ENCODE measurements at regions of chr16 and their contacts with region 1.

Region 1: DNA sequence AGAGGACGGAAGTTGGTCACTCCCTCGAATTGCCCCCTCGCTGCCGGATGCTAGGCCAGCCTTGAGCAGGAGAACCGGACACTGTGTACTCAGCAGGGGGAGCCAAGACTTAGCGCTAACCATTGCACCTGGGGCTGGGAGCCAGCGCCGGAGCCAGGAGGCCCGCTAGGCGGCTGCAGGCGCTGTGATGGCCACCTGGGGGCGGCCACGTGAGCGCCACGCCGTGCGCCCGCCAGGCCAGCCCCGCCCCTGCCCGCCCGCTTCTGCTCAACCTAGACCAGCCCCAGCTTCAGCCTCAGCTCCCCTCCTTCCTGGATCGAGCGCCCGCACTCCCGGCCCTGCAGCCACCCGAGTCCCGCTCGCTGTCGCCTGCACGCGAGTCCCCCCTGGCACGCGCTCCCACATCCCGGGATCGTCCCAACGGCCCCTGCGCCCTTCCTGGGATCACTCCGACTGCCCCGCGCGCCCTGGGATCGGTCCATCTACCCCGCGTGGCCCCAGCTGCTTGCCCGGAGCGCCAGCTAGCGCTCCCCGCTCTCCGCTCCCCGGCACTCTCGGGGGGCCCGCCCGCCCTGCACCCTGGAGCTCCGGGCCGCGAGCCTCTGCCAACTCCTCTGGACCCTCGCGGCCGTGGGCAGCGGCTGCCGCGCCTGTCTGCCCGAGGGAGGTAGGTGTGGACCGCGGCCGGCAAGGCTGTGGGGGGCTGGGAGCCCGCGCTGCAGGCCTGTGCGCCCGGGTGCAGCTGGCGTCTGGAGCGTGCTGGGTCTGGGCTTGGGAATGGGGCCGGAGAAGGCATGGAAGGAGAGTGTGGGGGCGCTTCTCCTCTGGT is at the start of gene EEF2K:
- DNase-seq: peak; percentile 96
- H3K4me3 Mint-ChIP-seq: peak within 1 kb of the TSS; percentile 79
- H3K27ac Mint-ChIP-seq: peak within 1 kb of the TSS; percentile 70
- H3K4me1 Mint-ChIP-seq: peaks cover 19% of the 10 kb centered on the region
- H3K27me3 Mint-ChIP-seq: no peaks in the 10 kb centered on the region
- CTCF ChIP-seq: peak; percentile 83
- total RNA-seq, gene EEF2K: 15.0 and 15.9 TPM in 2 replicates

Region 2: DNA sequence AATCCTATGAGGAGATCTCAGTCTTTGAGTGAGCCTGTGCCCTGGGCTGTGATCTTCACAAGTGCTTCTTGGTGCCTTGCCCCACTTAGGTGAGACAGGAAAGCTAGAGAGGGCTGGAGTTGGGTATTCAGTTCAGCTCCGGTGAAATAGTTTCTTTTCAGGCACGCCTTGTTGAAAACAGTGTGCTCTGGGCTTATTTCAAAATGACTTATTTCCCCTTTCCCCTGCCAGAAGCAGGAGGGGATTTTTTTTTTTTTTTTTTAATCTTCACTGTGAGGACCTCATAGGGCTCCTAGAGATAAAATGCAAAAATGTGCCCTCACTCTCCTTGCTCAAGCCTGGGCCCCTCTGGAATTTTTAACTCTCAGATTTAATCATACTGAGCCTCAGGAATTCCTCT is 171.1 kb before region 1 on chr16:
- CTCF ChIA-PET with region 1: no interaction called
- POLR2A ChIA-PET with region 1: no interaction called
- intact Hi-C with region 1: no loop called
- DNase-seq: no peak
- H3K4me3 Mint-ChIP-seq: no peak overlapping the region
- H3K27ac Mint-ChIP-seq: no peak overlapping the region
- H3K4me1 Mint-ChIP-seq: peaks cover 13% of the 10 kb centered on the region
- H3K27me3 Mint-ChIP-seq: no peaks in the 10 kb centered on the region
- CTCF ChIP-seq: no peak

Region 3: GRCh38 chr16:22181843-22182242 is 24.4 kb before region 1 on chr16:
- CTCF ChIA-PET with region 1: no interaction called
- POLR2A ChIA-PET with region 1: no interaction called
- intact Hi-C with region 1: no loop called
- DNase-seq: no peak
- H3K4me3 Mint-ChIP-seq: no peak overlapping the region
- H3K27ac Mint-ChIP-seq: no peak overlapping the region
- H3K4me1 Mint-ChIP-seq: no peaks in the 10 kb centered on the region
- H3K27me3 Mint-ChIP-seq: peaks cover 30% of the 10 kb centered on the region
- CTCF ChIP-seq: no peak

Region 4: DNA sequence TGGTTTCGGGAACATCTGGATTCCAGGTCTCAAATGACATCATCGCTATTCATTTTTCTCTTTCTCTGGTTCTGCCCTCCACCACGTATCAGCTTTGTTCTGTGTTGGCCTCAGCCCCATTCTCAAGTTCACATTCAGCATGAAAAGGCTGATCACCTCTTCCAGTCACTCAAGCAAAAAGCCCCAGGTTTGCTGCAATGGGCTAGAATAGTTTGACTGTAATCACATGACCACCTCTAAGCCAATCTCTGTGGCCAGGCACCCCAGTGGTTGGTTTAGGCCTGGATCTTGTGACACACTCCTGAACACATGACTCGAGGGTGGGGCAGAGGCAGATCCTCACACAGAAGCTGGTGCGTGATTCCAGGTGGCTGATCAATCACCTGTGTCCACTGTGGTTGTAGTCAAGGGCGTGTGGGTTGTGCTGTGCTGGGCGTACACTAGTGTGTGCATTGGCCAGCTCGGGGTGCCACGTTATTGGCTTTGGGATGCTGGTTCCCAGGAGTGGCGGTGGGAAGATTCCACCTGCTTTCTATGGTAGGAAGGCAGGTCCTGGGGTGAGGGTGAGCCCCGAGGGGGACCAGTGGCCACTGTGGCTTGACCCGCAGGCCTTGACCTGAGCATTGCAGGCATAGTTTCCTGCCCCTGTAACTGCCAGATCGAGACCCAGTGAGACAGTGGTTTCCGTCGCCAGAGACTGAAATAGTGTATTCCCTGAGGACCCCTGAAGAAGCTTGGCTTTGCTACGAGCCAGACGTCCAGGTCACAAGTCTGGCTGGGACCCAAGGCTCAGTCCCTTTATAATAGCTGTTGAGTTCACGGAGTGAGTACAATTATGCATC is 11.9 kb after region 1 on chr16:
- CTCF ChIA-PET with region 1: interaction called, 10 read pairs
- POLR2A ChIA-PET with region 1: interaction called, 11 read pairs
- intact Hi-C with region 1: no loop called
- DNase-seq: no peak
- H3K4me3 Mint-ChIP-seq: no peak overlapping the region
- H3K27ac Mint-ChIP-seq: no peak overlapping the region
- H3K4me1 Mint-ChIP-seq: peaks cover 19% of the 10 kb centered on the region
- H3K27me3 Mint-ChIP-seq: no peaks in the 10 kb centered on the region
- CTCF ChIP-seq: no peak

Region 5: GRCh38 chr16:22232277-22233042 is 26.2 kb after region 1 on chr16:
- CTCF ChIA-PET with region 1: interaction called, 6 read pairs
- POLR2A ChIA-PET with region 1: interaction called, 40 read pairs
- intact Hi-C with region 1: loop called (anchors 1 kb)
- DNase-seq: peak; percentile 91
- H3K4me3 Mint-ChIP-seq: peak overlapping the region; percentile 55
- H3K27ac Mint-ChIP-seq: peak overlapping the region; percentile 93
- H3K4me1 Mint-ChIP-seq: peaks cover 16% of the 10 kb centered on the region
- H3K27me3 Mint-ChIP-seq: no peaks in the 10 kb centered on the region
- CTCF ChIP-seq: no peak

Region 6: DNA sequence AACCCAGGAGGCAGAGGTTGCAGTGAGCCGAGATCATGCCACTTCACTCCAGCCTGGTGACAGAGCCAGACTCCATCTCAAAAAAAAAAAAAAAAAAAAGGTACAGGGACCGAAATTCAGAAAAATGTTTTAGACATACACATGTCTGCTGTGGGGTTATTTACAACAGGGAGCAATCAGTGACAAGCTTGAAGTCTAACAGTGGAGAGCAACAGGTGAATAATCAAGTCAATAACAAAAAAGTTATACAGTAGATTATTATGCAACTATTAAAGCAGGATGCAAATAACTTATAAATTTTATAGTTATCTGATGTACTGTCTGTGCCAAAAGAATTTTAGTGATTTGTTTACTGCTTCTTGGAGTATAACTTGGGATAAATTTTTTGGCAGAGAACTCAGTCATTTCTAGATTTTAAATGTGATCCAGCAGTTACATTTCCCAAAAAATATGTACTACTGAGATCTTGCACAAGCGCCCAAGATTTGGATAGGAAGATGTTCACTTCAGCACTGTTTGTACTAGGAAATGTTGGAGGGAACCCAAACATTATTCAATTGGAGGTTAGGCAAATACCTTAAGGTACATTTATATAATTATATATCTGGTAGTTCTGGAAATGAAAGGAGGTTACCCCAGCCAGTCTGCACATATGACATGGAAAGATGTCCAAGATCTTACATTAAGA is 33.9 kb after region 1 on chr16:
- CTCF ChIA-PET with region 1: interaction called, 6 read pairs
- POLR2A ChIA-PET with region 1: interaction called, 22 read pairs
- intact Hi-C with region 1: no loop called
- DNase-seq: peak; percentile 47
- H3K4me3 Mint-ChIP-seq: no peak overlapping the region
- H3K27ac Mint-ChIP-seq: no peak overlapping the region
- H3K4me1 Mint-ChIP-seq: peaks cover 7% of the 10 kb centered on the region
- H3K27me3 Mint-ChIP-seq: no peaks in the 10 kb centered on the region
- CTCF ChIP-seq: no peak

Region 7: DNA sequence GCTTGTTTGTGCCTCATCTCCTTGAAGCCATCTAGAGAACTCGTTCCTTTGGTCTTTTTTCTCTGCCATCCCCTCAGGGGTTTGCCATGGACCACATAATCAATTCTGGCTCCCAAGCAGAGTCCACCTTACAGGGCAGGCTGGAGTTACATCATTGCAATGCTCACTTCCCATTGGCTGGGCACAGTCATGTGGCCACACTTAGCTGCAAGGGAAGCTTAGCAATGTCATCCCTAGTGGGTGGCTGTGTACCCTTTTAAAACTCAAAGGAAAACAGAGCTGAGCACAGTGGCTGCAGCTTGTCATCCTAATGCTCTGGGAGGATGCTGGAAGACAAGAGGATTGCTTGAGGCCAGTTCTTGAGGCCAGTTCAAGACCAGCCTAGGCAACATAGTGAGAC is 49.1 kb after region 1 on chr16:
- CTCF ChIA-PET with region 1: no interaction called
- POLR2A ChIA-PET with region 1: no interaction called
- intact Hi-C with region 1: no loop called
- DNase-seq: no peak
- H3K4me3 Mint-ChIP-seq: no peak overlapping the region
- H3K27ac Mint-ChIP-seq: no peak overlapping the region
- H3K4me1 Mint-ChIP-seq: peaks cover 5% of the 10 kb centered on the region
- H3K27me3 Mint-ChIP-seq: no peaks in the 10 kb centered on the region
- CTCF ChIP-seq: no peak

Region 8: DNA sequence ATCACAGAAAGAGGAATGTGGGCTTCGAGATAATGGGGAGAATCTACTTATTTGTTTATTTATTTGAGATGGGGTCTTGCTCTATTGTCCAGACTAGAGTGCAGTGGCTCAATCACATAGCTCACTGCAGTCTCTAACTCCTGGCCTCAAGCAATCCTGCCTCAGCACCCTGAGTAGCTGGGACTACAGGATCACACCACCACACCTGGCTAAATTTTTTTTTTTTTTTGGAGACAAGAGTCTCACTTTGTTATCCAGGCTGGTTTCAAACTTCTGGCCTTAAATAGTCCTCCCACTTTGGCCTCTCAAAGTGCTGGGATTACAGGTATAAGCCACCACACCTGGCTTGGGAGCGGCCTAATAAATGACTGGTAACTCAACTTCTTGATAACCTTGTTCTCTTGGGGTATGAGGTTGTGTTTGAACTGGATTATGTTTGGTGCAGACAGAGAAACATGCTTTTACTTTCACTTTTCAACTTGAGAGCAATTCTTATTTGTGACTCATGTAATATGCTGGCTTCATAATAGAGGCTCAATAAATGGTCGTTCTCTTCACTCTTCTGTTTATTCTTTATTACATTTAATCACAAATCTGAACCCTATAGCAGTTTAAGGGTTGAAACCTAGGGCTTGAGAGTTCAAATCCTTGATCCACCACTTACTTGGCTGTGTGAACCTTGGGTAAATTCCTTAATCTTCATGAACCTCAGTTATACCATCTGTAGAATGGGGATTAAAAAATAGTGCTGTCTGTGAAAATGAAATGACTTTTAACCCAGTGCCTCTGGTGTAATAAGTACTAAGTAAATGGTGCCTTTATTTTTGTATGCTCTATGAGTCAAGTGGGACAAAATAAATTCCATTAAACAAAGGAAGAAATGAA is 478.6 kb after region 1 on chr16:
- CTCF ChIA-PET with region 1: no interaction called
- POLR2A ChIA-PET with region 1: no interaction called
- intact Hi-C with region 1: no loop called
- DNase-seq: no peak
- H3K4me3 Mint-ChIP-seq: no peak overlapping the region
- H3K27ac Mint-ChIP-seq: peak overlapping the region; percentile 53
- H3K4me1 Mint-ChIP-seq: peaks cover 11% of the 10 kb centered on the region
- H3K27me3 Mint-ChIP-seq: no peaks in the 10 kb centered on the region
- CTCF ChIP-seq: no peak

Measured in MCF 10A (cell line).